B cell (primary cell): ENCODE measurements at regions of chr12 and their contacts with region 1.

Region 1: GRCh38 chr12:8045952-8046944 is 13.7 kb downstream of the FOXJ2 start:
- DNase-seq: peak; percentile 79
- ATAC-seq: peak; percentile 64
- H3K4me3 ChIP-seq: no peak overlapping the region
- H3K4me3 Mint-ChIP-seq: no peak overlapping the region
- H3K27ac ChIP-seq: no peak overlapping the region
- H3K27ac Mint-ChIP-seq: no peak overlapping the region
- H3K4me1 ChIP-seq: peaks cover 6 to 10% of the 10 kb centered on the region in 2 donors
- H3K4me1 Mint-ChIP-seq: peaks cover 16% of the 10 kb centered on the region
- H3K27me3 ChIP-seq: no peaks in the 10 kb centered on the region
- H3K27me3 Mint-ChIP-seq: no peaks in the 10 kb centered on the region
- CTCF ChIP-seq: peak; percentile 96

Region 2: DNA sequence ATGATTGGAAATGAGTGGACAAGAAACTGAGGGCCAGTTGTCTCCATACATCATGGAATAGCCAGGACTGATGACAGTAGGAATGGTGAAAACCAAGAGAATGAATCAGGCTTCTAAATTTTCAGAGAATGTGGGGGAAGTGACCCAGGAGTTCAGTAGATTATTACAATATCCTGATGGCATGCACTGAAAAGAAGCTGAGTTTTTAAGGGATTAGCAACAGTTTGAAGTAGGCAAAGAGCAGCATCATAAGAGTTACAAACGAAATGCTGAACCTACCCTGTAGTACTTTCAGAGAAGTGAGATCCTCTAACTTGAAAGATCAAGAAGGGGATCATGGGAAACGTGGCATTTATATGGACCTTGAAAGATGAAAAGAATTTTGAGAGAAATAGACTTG is 186.7 kb before region 1 on chr12:
- CTCF ChIA-PET with region 1: interaction called, 11 read pairs
- POLR2A ChIA-PET with region 1: no interaction called
- intact Hi-C with region 1: loop called (anchors 1 kb)
- DNase-seq: no peak
- ATAC-seq: no peak
- H3K4me3 ChIP-seq: no peak overlapping the region
- H3K4me3 Mint-ChIP-seq: no peak overlapping the region
- H3K27ac ChIP-seq: no peak overlapping the region
- H3K27ac Mint-ChIP-seq: no peak overlapping the region
- H3K4me1 ChIP-seq: peaks cover 3 to 4% of the 10 kb centered on the region in 2 donors
- H3K4me1 Mint-ChIP-seq: peaks cover 9% of the 10 kb centered on the region
- H3K27me3 ChIP-seq: peaks cover 0 to 8% (median 0%) of the 10 kb centered on the region in 4 experiments
- H3K27me3 Mint-ChIP-seq: no peaks in the 10 kb centered on the region
- CTCF ChIP-seq: no peak

Region 3: DNA sequence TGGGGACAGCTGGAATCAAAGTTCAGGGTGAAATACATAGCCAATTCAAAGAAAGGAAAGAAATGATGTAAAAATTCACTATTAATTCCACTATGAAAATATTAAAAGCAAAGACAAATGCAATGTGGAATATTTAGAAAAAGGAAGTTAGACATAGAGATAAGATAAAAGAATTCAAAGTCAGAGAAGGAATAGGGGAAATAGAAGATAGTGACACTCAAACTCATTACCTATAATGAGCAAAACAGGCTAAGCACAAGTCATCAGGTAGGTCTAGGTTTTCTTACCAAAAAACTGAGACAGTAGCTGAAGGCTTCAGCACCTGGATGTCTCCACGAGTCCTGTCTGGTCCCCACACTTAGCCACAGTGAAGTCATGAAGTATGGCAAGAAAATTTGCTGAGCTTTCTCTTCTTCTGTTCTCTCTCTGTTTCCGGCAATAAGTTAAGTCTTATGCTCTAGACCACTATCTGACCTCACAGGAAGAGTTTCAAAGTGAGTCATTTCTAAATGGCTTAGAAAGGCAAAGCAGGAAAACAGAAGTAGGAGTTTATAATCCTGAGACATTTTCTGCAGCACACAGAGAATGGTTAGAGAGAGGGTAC is 19.8 kb after region 1 on chr12 and contains the start of gene C3AR1:
- CTCF ChIA-PET with region 1: interaction called, 10 read pairs
- POLR2A ChIA-PET with region 1: no interaction called
- intact Hi-C with region 1: no loop called
- DNase-seq: peak; percentile 35
- ATAC-seq: peak; percentile 61
- H3K4me3 ChIP-seq: peak within 1 kb of the TSS in 1 of 5 experiments; percentile 34
- H3K4me3 Mint-ChIP-seq: peak within 1 kb of the TSS; percentile 1
- H3K27ac ChIP-seq: peak within 1 kb of the TSS; percentile 14 to 20
- H3K27ac Mint-ChIP-seq: peak within 1 kb of the TSS; percentile 65
- H3K4me1 ChIP-seq: peaks cover 6 to 9% of the 10 kb centered on the region in 2 donors
- H3K4me1 Mint-ChIP-seq: peaks cover 13% of the 10 kb centered on the region
- H3K27me3 ChIP-seq: no peaks in the 10 kb centered on the region
- H3K27me3 Mint-ChIP-seq: peaks cover 3% of the 10 kb centered on the region
- CTCF ChIP-seq: no peak
- total RNA-seq, gene C3AR1: 0.15 and 0.64 TPM in 2 replicates

Region 4: GRCh38 chr12:8157484-8158198 is 111.4 kb after region 1 on chr12:
- CTCF ChIA-PET with region 1: no interaction called
- POLR2A ChIA-PET with region 1: no interaction called
- intact Hi-C with region 1: no loop called
- DNase-seq: no peak
- ATAC-seq: no peak
- H3K4me3 ChIP-seq: no peak overlapping the region
- H3K4me3 Mint-ChIP-seq: no peak overlapping the region
- H3K27ac ChIP-seq: no peak overlapping the region
- H3K27ac Mint-ChIP-seq: no peak overlapping the region
- H3K4me1 ChIP-seq: no peaks in the 10 kb centered on the region
- H3K4me1 Mint-ChIP-seq: peaks cover 2% of the 10 kb centered on the region
- H3K27me3 ChIP-seq: peaks cover 0 to 5% (median 0%) of the 10 kb centered on the region in 4 experiments
- H3K27me3 Mint-ChIP-seq: peaks cover 21% of the 10 kb centered on the region
- CTCF ChIP-seq: no peak